CD4-positive, alpha-beta memory T cell (primary cell): ENCODE measurements at regions of chr3 and their contacts with region 1.

Region 1: GRCh38 chr3:51434746-51435327 is 43.8 kb downstream of the RBM15B start:
- DNase-seq: peak; percentile 48 to 56 (median 53)
- H3K4me3 ChIP-seq: no peak overlapping the region
- H3K4me3 Mint-ChIP-seq: no peak overlapping the region
- H3K27ac ChIP-seq: no peak overlapping the region
- H3K27ac Mint-ChIP-seq: peak overlapping the region in 6 of 7 donors; percentile 31 to 81 (median 55)
- H3K4me1 ChIP-seq: no peaks in the 10 kb centered on the region
- H3K4me1 Mint-ChIP-seq: peaks cover 7 to 13% (median 8%) of the 10 kb centered on the region in 4 donors
- H3K27me3 ChIP-seq: no peaks in the 10 kb centered on the region
- H3K27me3 Mint-ChIP-seq: no peaks in the 10 kb centered on the region

Region 2: GRCh38 chr3:51445544-51446280 is 10.9 kb after region 1 on chr3:
- CTCF ChIA-PET with region 1: interaction called, 14 read pairs
- POLR2A ChIA-PET with region 1: no interaction called
- intact Hi-C with region 1: no loop called
- DNase-seq: no peak
- H3K4me3 ChIP-seq: no peak overlapping the region
- H3K4me3 Mint-ChIP-seq: no peak overlapping the region
- H3K27ac ChIP-seq: no peak overlapping the region
- H3K27ac Mint-ChIP-seq: peak overlapping the region in 2 of 7 donors; percentile 25 to 57
- H3K4me1 ChIP-seq: peaks cover 15% of the 10 kb centered on the region
- H3K4me1 Mint-ChIP-seq: peaks cover 26 to 42% (median 40%) of the 10 kb centered on the region in 4 donors
- H3K27me3 ChIP-seq: no peaks in the 10 kb centered on the region
- H3K27me3 Mint-ChIP-seq: no peaks in the 10 kb centered on the region